ENCODE measurements at regions of chr12 and their contacts with region 1.

Region 1: GRCh38 chr12:49088190-49088931 is 6.2 kb downstream of the DHH start:
- DNase-seq: peak; percentile 89
- H3K4me3 ChIP-seq: peak overlapping the region in 2 of 8 donors; percentile 15 to 51
- H3K27ac ChIP-seq: no peak overlapping the region
- H3K4me1 ChIP-seq: peaks cover 43 to 58% (median 55%) of the 10 kb centered on the region in 6 donors
- H3K27me3 ChIP-seq: peaks cover 0 to 56% (median 47%) of the 10 kb centered on the region in 7 donors
- CTCF ChIP-seq: peak; percentile 66 to 95 (median 90)
- POLR2A ChIP-seq: no peak

Region 2: DNA sequence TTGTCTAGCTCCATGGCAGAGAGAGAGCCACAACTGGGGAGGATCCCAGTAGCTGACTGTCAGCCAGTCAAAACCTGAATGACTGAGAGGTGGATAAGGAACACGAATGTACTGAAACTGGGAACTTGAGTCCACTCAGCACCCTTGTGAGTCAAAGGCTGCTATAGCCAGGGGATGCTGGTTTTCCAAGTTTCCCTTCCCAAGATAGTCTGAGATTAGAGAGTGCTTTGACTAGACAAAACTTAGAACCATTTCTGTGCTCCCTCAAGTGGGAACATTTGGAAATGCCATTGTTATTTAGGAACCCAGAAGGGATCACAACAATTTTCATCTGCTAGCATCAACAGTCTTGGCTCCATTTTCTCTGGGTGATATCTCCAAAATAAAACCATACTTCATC is 73.8 kb before region 1 on chr12:
- intact Hi-C with region 1: no loop called
- DNase-seq: no peak
- H3K4me3 ChIP-seq: no peak overlapping the region
- H3K27ac ChIP-seq: no peak overlapping the region
- H3K4me1 ChIP-seq: peaks cover 7 to 49% (median 22%) of the 10 kb centered on the region in 6 donors
- H3K27me3 ChIP-seq: no peaks in the 10 kb centered on the region
- CTCF ChIP-seq: no peak
- POLR2A ChIP-seq: no peak

Region 3: GRCh38 chr12:49121047-49121696 is 32.8 kb after region 1 on chr12:
- intact Hi-C with region 1: loop called (anchors 5 kb)
- DNase-seq: no peak
- H3K4me3 ChIP-seq: no peak overlapping the region
- H3K27ac ChIP-seq: no peak overlapping the region
- H3K4me1 ChIP-seq: peaks cover 0 to 6% (median 0%) of the 10 kb centered on the region in 6 donors
- H3K27me3 ChIP-seq: no peaks in the 10 kb centered on the region
- CTCF ChIP-seq: peak in 9 of 11 experiments; percentile 14 to 62 (median 53)
- POLR2A ChIP-seq: no peak

Region 4: DNA sequence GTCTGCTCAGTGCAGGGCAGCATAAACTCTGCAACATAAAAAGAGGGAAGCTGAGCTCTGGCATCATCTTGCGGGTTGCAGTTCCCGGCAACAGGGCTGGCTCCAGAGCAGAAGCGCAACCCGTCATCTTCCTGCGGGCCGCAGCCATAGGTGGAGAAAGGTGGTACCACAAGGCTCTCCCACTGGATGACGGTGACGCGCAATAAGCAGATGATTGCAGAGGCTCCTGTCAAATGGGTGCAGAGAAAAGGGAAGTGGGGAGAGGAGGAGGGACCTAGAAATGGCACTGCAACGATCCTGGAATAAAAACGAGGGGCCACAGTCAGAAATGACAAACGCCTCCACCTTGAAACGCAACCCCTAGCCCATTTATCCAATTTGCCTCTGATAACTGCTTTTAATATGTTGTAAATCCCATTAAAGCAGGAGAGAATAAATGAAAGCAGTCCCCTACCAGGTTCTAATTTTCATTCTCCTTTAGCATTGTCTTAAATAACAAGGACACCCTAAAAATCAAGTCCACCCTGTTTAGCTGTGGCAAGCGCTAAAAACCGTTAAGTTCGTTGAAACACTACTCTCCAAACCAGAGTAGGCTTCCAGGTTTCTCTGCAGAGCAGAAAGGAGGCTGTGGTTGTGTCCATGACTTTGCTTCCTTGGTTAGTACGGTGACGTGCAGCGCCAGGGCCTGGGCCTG is 145.6 kb after region 1 on chr12:
- intact Hi-C with region 1: loop called (anchors 5 kb)
- DNase-seq: peak; percentile 94
- H3K4me3 ChIP-seq: peak overlapping the region in 6 of 8 donors; percentile 36 to 76 (median 60)
- H3K27ac ChIP-seq: peak overlapping the region; percentile 85 to 99 (median 94)
- H3K4me1 ChIP-seq: peaks cover 4 to 58% (median 31%) of the 10 kb centered on the region in 6 donors
- H3K27me3 ChIP-seq: no peaks in the 10 kb centered on the region
- CTCF ChIP-seq: no peak
- POLR2A ChIP-seq: peak in 1 of 3 donors; percentile 76

Region 5: DNA sequence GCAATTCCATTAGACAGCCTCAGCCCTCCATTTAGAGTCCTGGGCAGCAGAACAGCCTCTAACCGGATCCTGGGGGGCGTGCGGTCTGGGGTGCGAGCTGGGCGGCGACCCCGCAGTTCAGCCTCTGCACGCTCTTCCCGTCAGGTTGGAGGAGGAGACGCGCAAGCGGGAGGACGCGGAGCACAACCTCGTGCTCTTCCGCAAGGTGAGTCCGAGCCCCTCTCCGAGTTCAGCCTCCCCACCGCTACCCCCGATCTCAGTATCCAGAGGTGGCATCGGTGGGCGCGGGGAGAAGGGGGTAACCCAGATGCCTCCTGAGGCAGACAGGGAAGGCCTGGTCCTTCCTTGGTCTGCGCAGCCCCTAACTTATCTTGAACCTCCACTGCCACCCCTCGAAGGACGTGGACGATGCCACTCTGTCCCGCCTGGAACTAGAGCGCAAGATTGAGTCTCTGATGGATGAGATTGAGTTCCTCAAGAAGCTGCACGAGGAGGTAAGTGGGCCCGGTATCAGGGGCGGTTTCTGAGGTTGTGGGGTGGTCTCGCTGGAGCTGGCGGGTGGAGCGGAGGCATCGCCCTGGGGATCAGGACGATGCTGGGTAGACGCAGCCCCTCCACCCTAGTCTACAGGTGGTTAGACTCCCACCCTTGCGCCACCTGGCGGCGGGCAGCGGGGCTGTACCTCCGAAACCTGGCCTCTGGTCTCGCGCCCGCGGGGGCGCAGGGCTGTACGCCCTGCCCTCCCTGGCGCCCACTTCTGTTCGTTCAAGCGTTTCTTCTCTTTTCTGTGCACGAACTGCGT is 207.9 kb after region 1 on chr12:
- intact Hi-C with region 1: no loop called
- DNase-seq: peak; percentile 86
- H3K4me3 ChIP-seq: peak overlapping the region in 7 of 8 donors; percentile 18 to 62 (median 25)
- H3K27ac ChIP-seq: no peak overlapping the region
- H3K4me1 ChIP-seq: peaks cover 10 to 50% (median 34%) of the 10 kb centered on the region in 6 donors
- H3K27me3 ChIP-seq: peaks cover 17 to 90% (median 50%) of the 10 kb centered on the region in 7 donors
- CTCF ChIP-seq: peak in 10 of 11 experiments; percentile 11 to 80 (median 61)
- POLR2A ChIP-seq: no peak